Activated CD4-positive, alpha-beta memory T cell treated with anti-CD3 and anti-CD28 coated beads, Interleukin-2, amount 10 ng/mL, durations not matched to agents 7 days and 5 days (primary cell): ENCODE measurements at regions of chr12 and their contacts with region 1.

Region 1: GRCh38 chr12:57693659-57694458 is at the start of gene OS9:
- DNase-seq: peak; percentile 96
- H3K4me3 Mint-ChIP-seq: no peak within 1 kb of the TSS
- H3K27ac Mint-ChIP-seq: no peak within 1 kb of the TSS
- H3K4me1 Mint-ChIP-seq: peaks cover 7% of the 10 kb centered on the region
- H3K27me3 Mint-ChIP-seq: peaks cover 13% of the 10 kb centered on the region
- total RNA-seq, gene OS9: 146 to 152 TPM

Region 2: GRCh38 chr12:57632694-57633477 is 61.0 kb before region 1 on chr12 and contains the start of gene B4GALNT1:
- CTCF ChIA-PET with region 1: interaction called, 16 read pairs
- POLR2A ChIA-PET with region 1: interaction called, 3 read pairs
- DNase-seq: peak; percentile 71
- H3K4me3 Mint-ChIP-seq: peak within 1 kb of the TSS; percentile 63
- H3K27ac Mint-ChIP-seq: no peak within 1 kb of the TSS
- H3K4me1 Mint-ChIP-seq: peaks cover 14% of the 10 kb centered on the region
- H3K27me3 Mint-ChIP-seq: peaks cover 57% of the 10 kb centered on the region
- total RNA-seq, gene B4GALNT1: 1.4 to 1.8 TPM

Region 3: DNA sequence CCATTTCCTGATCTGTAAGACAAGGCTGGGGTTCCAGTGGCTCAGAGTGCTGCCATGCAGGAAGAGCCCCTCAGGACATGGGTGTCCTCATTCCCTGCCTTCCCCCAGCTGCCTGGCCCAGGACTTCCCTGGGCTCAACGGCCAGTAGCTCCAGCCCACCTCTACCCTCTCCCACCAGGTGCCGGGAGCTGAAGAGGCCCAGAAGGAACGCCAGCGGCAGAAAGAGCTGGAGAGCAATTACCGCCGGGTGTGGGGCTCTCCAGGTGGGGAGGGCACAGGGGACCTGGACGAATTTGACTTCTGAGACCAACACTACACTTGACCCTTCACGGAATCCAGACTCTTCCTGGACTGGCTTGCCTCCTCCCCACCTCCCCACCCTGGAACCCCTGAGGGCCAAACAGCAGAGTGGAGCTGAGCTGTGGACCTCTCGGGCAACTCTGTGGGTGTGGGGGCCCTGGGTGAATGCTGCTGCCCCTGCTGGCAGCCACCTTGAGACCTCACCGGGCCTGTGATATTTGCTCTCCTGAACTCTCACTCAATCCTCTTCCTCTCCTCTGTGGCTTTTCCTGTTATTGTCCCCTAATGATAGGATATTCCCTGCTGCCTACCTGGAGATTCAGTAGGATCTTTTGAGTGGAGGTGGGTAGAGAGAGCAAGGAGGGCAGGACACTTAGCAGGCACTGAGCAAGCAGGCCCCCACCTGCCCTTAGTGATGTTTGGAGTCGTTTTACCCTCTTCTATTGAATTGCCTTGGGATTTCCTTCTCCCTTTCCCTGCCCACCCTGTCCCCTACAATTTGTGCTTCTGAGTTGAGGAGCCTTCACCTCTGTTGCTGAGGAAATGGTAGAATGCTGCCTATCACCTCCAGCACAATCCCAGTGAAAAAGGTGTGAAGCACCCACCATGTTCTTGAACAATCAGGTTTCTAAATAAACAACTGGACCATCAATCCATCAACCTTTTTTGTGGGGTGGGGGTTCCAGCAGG is 27.0 kb after region 1 on chr12:
- CTCF ChIA-PET with region 1: interaction called, 4 read pairs
- POLR2A ChIA-PET with region 1: interaction called, 16 read pairs
- DNase-seq: no peak
- H3K4me3 Mint-ChIP-seq: no peak overlapping the region
- H3K27ac Mint-ChIP-seq: no peak overlapping the region
- H3K4me1 Mint-ChIP-seq: peaks cover 2% of the 10 kb centered on the region
- H3K27me3 Mint-ChIP-seq: no peaks in the 10 kb centered on the region

Region 4: DNA sequence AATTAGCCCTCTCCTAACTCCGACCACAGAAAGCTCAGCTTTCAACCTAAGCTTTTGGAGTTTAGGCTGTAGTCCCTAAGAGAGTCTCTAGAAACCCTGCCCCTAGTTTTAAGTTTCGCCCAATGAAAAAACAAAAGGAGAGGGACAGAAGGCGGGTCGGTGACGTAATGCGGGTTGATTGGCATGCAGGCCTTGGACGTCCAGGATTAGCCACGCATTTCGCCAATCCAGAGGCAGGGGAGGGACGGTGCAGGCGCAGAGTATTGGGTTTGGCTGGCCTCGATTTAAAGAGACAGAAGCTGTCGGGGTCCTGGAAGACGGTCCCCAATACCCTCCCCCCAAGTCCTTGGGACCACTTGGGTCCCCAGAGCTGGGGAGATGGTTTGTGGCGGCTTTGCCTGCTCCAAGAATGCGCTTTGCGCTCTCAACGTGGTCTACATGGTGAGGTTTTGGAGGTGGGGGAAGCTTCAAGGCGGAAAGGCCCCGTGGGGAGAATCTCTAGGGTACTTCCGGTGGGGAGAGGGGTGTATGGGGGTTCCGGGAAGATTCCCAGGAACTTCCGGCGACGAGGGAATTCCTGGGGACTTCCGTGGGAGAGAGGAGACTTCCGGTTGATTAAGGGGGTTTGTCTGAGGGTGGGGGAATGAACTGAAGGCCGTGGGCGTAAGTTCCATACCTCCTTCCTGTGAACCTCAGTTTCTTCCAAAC is 51.1 kb after region 1 on chr12 and contains the start of gene TSPAN31:
- CTCF ChIA-PET with region 1: interaction called, 12 read pairs
- POLR2A ChIA-PET with region 1: interaction called, 11 read pairs
- DNase-seq: peak; percentile 97
- H3K4me3 Mint-ChIP-seq: peak within 1 kb of the TSS; percentile 77
- H3K27ac Mint-ChIP-seq: peak within 1 kb of the TSS; percentile 93
- H3K4me1 Mint-ChIP-seq: peaks cover 53% of the 10 kb centered on the region
- H3K27me3 Mint-ChIP-seq: no peaks in the 10 kb centered on the region
- total RNA-seq, gene TSPAN31: 21.8 to 23.0 TPM

Region 5: GRCh38 chr12:57756406-57757341 is 62.8 kb after region 1 on chr12:
- CTCF ChIA-PET with region 1: no interaction called
- POLR2A ChIA-PET with region 1: no interaction called
- DNase-seq: peak; percentile 74
- H3K4me3 Mint-ChIP-seq: peak overlapping the region; percentile 78
- H3K27ac Mint-ChIP-seq: peak overlapping the region; percentile 8
- H3K4me1 Mint-ChIP-seq: peaks cover 49% of the 10 kb centered on the region
- H3K27me3 Mint-ChIP-seq: peaks cover 3% of the 10 kb centered on the region